Ascending aorta (tissue), 2 donors: ENCODE measurements at regions of chr4 and their contacts with region 1.

Region 1: DNA sequence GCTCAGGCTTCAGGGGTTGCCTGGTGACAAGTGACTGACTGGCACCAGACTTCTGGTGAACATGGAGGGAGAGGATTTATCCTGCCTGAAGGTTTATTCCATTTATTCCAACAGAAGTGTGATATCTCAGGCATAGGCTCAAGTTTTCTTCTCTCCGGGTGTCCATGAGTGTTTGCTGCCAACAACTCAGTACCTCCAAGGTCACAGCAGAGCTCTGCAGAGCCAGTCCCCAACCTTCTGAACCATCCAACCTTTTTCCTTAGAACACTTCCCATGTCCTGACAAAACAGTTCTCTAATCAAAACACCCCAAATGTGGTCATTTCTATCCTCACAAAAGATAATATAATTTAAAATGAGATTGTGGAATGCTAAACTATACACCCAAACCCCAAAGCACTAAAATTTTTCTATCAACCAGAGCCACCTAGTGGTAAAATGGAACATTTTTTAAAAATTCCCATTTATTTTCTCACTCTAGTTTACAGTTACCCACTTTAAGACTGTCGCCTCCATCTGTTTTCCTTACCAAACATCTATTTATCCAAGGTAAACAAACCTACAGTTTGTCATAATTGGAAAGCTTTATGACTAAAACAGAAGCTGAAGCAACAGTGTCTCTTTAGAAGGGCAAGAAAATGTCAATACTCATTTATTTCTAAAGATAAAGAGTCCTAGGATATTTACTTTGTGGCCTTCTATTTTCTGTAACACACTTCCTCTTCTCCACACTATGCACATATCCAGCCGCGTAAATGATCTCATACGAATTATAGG is 39.6 kb downstream of the TMEM154 start:
- DNase-seq: no peak
- H3K4me3 ChIP-seq: no peak overlapping the region
- H3K27ac ChIP-seq: no peak overlapping the region
- H3K4me1 ChIP-seq: no peaks in the 10 kb centered on the region
- H3K27me3 ChIP-seq: no peaks in the 10 kb centered on the region
- CTCF ChIP-seq: peak; percentile 29 to 67 (median 44)

Region 2: GRCh38 chr4:151624626-151625565 is 1015.4 kb before region 1 on chr4:
- intact Hi-C with region 1: no loop called
- DNase-seq: peak in 1 of 2 donors; percentile 62
- H3K4me3 ChIP-seq: no peak overlapping the region
- H3K27ac ChIP-seq: no peak overlapping the region
- H3K4me1 ChIP-seq: no peaks in the 10 kb centered on the region
- H3K27me3 ChIP-seq: no peaks in the 10 kb centered on the region
- CTCF ChIP-seq: no peak

Region 3: DNA sequence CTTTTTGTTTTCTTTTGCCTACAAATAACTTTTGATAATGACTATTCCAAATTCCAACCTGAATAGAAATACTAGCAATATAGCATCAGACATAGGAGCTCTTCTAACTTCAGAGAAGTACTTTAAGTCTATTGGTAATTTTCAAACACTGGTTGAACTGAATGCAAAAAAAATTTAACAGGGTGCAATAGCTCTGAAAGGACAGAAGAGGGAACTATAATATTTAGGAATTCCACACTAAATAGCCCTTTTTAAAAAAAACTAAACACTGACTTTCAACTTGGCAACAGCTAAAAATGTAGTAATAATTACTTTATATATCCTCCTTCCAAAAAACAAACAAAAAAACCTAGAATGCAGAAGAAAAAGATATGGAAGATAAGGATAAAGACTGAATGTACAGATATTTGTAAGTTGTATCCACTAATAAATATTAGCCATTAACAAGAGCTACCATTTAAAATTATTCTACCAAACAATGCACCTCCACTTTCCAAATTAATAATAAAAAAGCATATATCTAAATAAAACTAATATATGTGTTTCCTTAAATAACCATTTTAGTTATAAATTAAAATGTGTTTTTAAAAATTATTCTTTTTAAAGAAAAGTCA is 185.7 kb before region 1 on chr4:
- intact Hi-C with region 1: loop called (anchors 5 kb)
- DNase-seq: no peak
- H3K4me3 ChIP-seq: no peak overlapping the region
- H3K27ac ChIP-seq: no peak overlapping the region
- H3K4me1 ChIP-seq: no peaks in the 10 kb centered on the region
- H3K27me3 ChIP-seq: no peaks in the 10 kb centered on the region
- CTCF ChIP-seq: peak; percentile 18 to 48 (median 18)

Region 4: DNA sequence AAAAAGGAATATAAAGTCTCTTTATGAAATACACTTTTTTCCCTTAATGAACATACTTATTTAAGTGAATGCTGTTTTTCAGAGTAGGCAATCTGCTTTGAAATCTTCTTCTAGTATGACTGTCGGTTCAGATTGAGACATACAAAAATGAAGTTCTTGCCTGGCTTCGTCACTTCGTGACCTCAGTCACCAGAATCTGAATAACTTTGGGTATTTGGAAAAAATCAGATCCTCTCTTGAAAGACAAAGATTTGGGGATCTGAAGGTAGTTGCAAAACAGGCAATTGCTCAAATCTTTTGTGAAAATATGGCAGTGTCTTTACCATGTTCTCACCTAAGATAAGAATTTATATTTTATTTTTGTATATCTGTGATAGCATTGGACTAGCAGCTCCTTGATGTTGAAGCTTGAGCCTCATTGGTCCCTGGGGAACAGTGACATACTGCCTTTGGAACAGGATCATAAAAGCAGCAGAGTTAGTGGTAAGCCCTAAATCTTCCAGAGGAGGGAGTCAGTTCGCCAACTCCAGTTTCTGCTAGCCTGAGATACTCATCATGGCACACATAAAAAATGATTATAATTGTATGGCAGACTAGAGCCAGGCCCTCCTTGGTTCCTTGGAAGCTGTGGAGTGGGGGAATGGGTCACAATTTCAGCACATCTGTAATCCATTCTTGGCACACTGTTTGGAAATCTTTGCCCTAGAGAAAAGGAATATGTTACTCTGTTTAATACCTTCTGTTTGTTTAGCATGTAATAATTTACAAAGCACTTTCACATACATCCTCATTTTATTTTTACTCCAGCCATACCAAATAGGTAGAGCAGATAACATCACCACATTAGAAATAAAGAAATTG is 144.5 kb after region 1 on chr4:
- intact Hi-C with region 1: no loop called
- DNase-seq: no peak
- H3K4me3 ChIP-seq: no peak overlapping the region
- H3K27ac ChIP-seq: no peak overlapping the region
- H3K4me1 ChIP-seq: peaks cover 0 to 6% of the 10 kb centered on the region in 2 donors
- H3K27me3 ChIP-seq: no peaks in the 10 kb centered on the region
- CTCF ChIP-seq: peak in 1 of 3 experiments; percentile 3